CD4-positive, alpha-beta T cell (primary cell): ENCODE measurements at regions of chr7 and their contacts with region 1.

Region 1: GRCh38 chr7:7968543-7969305 is at the start of gene GLCCI1:
- DNase-seq: peak; percentile 91 to 99 (median 96)
- ATAC-seq: peak; percentile 90
- H3K4me3 ChIP-seq: peak within 1 kb of the TSS; percentile 86
- H3K4me3 Mint-ChIP-seq: peak within 1 kb of the TSS; percentile 94
- H3K27ac ChIP-seq: peak within 1 kb of the TSS; percentile 69 to 92
- H3K27ac Mint-ChIP-seq: peak within 1 kb of the TSS; percentile 78
- H3K4me1 ChIP-seq: peaks cover 14% of the 10 kb centered on the region
- H3K4me1 Mint-ChIP-seq: peaks cover 36% of the 10 kb centered on the region
- H3K27me3 ChIP-seq: no peaks in the 10 kb centered on the region
- H3K27me3 Mint-ChIP-seq: no peaks in the 10 kb centered on the region
- CTCF ChIP-seq: no peak
- total RNA-seq, gene GLCCI1: 22.2 to 22.3 TPM

Region 2: DNA sequence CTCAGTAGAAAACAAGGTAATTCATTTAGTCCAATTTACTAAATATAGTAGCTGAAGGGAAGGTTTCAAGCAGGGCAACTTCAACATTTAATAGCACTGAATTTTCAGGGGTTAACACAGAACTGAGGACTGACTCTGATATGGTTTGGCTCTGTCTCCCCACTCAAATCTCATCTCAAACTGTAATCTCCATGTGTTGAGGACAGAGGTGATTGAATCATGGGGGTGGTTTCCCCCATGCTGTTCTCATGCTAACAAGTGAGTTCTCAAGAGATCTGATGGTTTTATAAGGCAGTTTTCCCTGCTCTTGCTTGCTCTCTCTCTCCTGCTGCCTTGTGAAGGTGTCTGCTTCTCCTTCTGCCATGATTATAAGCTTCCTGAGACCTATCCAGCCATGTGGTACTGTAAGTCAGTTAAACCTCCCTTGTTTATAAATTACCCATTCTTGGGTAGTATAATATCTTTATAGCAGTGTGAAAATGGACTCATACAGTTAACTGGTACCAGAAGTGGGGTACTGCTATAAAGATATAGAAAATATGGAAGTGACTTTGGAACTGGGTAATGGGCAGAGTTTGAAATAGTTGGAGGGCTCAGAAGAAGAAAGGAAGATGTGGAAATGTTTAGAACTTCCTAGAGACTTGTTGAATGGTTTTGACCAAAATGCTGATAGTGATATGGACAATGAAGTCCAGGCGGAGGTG is 337.9 kb before region 1 on chr7:
- CTCF ChIA-PET with region 1: no interaction called
- POLR2A ChIA-PET with region 1: no interaction called
- intact Hi-C with region 1: no loop called
- DNase-seq: no peak
- ATAC-seq: no peak
- H3K4me3 ChIP-seq: no peak overlapping the region
- H3K4me3 Mint-ChIP-seq: no peak overlapping the region
- H3K27ac ChIP-seq: no peak overlapping the region
- H3K27ac Mint-ChIP-seq: no peak overlapping the region
- H3K4me1 ChIP-seq: no peaks in the 10 kb centered on the region
- H3K4me1 Mint-ChIP-seq: no peaks in the 10 kb centered on the region
- H3K27me3 ChIP-seq: no peaks in the 10 kb centered on the region
- H3K27me3 Mint-ChIP-seq: no peaks in the 10 kb centered on the region
- CTCF ChIP-seq: no peak

Region 3: GRCh38 chr7:7681179-7681935 is 287.4 kb before region 1 on chr7:
- CTCF ChIA-PET with region 1: no interaction called
- POLR2A ChIA-PET with region 1: interaction called, 18 read pairs
- intact Hi-C with region 1: no loop called
- DNase-seq: peak in 9 of 14 experiments; percentile 9 to 77 (median 19)
- ATAC-seq: peak; percentile 85
- H3K4me3 ChIP-seq: no peak overlapping the region
- H3K4me3 Mint-ChIP-seq: no peak overlapping the region
- H3K27ac ChIP-seq: no peak overlapping the region
- H3K27ac Mint-ChIP-seq: peak overlapping the region; percentile 64
- H3K4me1 ChIP-seq: no peaks in the 10 kb centered on the region
- H3K4me1 Mint-ChIP-seq: peaks cover 45% of the 10 kb centered on the region
- H3K27me3 ChIP-seq: no peaks in the 10 kb centered on the region
- H3K27me3 Mint-ChIP-seq: no peaks in the 10 kb centered on the region
- CTCF ChIP-seq: peak; percentile 78

Region 4: DNA sequence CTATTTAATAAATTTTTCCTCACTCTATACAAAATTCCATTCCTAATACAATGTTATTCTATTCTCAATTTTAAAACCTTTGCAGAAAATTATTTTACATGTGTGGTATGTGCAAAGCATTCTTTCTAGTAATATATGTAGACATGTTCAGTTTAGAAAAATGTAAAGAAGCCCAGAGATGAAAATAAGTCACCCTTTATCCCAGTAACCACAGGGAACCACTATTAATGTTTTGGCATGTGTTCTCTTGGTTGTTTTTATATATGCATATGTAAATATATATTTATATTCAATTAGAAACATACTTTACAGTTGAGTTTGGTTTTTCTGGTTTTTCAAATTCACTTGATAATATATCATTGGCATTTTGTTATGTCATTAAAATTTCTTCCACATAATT is 14.9 kb before region 1 on chr7:
- CTCF ChIA-PET with region 1: interaction called, 3 read pairs
- POLR2A ChIA-PET with region 1: interaction called, 13 read pairs
- intact Hi-C with region 1: no loop called
- DNase-seq: no peak
- ATAC-seq: no peak
- H3K4me3 ChIP-seq: no peak overlapping the region
- H3K4me3 Mint-ChIP-seq: no peak overlapping the region
- H3K27ac ChIP-seq: no peak overlapping the region
- H3K27ac Mint-ChIP-seq: no peak overlapping the region
- H3K4me1 ChIP-seq: no peaks in the 10 kb centered on the region
- H3K4me1 Mint-ChIP-seq: no peaks in the 10 kb centered on the region
- H3K27me3 ChIP-seq: no peaks in the 10 kb centered on the region
- H3K27me3 Mint-ChIP-seq: no peaks in the 10 kb centered on the region
- CTCF ChIP-seq: no peak

Region 5: DNA sequence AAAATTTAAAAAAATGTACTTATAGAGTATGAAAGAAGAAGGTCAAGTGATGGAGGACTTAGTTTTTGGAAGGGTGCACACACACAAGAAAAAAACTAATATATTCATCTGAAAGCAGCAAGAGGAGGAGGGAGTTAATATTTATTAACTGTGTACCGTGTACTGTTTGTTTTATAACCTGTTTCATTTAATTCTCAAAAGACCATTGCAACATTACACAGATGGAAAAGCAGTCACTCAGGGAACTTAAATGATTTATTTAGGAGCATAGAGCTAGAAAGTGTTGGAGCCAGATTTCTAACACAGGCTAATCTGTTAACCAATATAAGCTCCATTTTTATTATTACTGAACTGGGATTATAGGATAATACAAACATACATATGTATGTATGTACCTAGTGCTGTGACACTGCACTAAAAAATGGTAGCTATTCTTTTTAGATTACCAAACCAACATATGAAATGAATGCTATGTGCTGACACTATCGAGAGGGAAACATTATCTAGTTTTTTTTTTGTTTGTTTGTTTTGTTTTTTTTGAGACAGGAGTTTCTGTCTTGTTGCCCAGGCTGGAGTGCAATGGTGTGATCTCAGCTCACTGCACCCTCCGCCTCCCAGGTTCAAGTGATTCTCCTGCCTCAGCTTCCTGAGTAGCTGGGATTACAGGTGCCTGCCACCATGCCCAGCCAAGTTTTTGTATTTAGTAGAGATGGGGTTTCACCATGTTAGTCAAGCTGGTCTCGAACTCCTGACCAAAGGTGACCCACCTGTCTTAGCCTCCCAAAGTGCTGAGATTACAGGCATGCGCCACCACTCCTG is 36.8 kb after region 1 on chr7:
- CTCF ChIA-PET with region 1: no interaction called
- POLR2A ChIA-PET with region 1: interaction called, 7 read pairs
- intact Hi-C with region 1: loop called in 1 of 2 experiments (anchors 5 kb)
- DNase-seq: no peak
- ATAC-seq: no peak
- H3K4me3 ChIP-seq: no peak overlapping the region
- H3K4me3 Mint-ChIP-seq: no peak overlapping the region
- H3K27ac ChIP-seq: no peak overlapping the region
- H3K27ac Mint-ChIP-seq: peak overlapping the region; percentile 38
- H3K4me1 ChIP-seq: no peaks in the 10 kb centered on the region
- H3K4me1 Mint-ChIP-seq: peaks cover 26% of the 10 kb centered on the region
- H3K27me3 ChIP-seq: no peaks in the 10 kb centered on the region
- H3K27me3 Mint-ChIP-seq: no peaks in the 10 kb centered on the region
- CTCF ChIP-seq: no peak

Region 6: DNA sequence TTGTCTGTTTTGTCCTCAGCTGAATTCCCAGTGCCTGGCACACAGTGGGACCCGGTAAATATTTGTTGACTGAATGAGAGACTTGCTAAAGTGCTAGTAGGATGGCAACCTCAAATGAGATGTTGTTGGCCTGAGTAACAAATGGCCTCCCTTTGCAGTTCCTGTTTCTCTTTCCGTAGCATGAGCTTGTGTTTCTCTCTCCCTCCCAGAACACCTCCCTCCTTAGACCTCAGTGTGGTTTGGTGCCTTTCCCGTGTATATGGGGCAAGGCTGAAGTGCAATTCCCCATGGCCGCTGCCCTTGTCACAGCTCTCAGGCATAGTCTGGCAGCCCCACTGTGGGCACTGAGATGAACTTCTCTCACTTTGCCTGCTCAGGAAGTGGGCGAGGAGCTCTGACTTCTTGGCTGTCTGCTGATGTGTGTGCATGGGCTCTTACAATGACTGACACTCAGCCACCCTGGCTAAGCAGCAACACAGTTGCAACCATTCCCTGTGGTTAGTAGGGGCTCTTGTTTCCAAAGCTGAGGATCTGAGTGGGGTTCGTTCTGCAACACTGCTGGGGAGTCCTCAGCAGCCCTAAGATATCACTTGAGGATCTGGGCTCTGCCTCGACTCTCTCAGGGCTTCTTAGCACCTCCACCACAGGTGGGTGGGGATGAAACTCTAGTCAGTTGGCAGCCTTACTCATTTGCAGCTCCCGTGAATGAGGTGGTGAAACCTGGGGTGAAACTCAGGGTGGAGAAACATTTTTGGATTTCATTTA is 157.1 kb after region 1 on chr7:
- CTCF ChIA-PET with region 1: interaction called, 3 read pairs
- POLR2A ChIA-PET with region 1: interaction called, 29 read pairs
- intact Hi-C with region 1: loop called (anchors 2 to 5 kb)
- DNase-seq: peak; percentile 60 to 93 (median 76)
- ATAC-seq: peak; percentile 94
- H3K4me3 ChIP-seq: no peak overlapping the region
- H3K4me3 Mint-ChIP-seq: peak overlapping the region; percentile 56
- H3K27ac ChIP-seq: peak overlapping the region; percentile 74 to 83
- H3K27ac Mint-ChIP-seq: peak overlapping the region; percentile 96
- H3K4me1 ChIP-seq: peaks cover 83% of the 10 kb centered on the region
- H3K4me1 Mint-ChIP-seq: peaks cover 82% of the 10 kb centered on the region
- H3K27me3 ChIP-seq: no peaks in the 10 kb centered on the region
- H3K27me3 Mint-ChIP-seq: no peaks in the 10 kb centered on the region
- CTCF ChIP-seq: no peak

Region 7: DNA sequence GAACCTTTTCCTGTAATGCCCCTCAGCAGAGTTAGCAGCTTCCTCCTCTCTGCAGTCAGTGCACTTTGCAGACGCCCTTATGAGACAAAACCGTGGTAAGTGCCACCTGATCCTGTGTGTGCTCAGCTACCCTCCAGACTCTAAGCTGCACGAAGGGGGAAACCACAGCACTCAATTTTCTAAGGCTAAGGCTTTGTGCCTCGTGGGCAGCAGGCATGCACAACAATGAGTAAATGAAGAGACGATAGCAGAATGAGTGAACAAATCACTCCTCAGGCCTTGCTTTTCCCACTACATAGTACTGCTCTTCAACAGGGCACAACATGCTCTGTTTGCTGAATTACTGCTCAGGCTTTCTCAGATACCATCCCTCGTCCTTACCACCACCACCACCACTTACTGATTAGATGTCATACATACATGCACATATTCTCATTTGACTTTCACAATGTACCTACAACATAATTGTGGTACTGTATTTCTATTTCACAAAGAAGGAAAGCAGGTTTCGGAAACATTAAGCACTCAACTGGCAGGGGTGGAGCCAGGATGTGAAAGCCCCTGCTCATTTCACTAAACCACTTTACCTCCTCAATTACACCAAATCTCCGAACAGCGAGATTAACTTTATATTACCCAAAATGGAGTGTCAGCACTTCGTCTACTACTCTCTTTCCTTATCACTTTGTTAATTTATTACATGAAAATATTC is 207.8 kb after region 1 on chr7:
- CTCF ChIA-PET with region 1: no interaction called
- POLR2A ChIA-PET with region 1: interaction called, 4 read pairs
- intact Hi-C with region 1: loop called in 1 of 2 experiments (anchors 1 kb)
- DNase-seq: peak; percentile 47 to 87 (median 64)
- ATAC-seq: peak; percentile 93
- H3K4me3 ChIP-seq: peak overlapping the region; percentile 22
- H3K4me3 Mint-ChIP-seq: peak overlapping the region; percentile 72
- H3K27ac ChIP-seq: peak overlapping the region; percentile 82 to 88
- H3K27ac Mint-ChIP-seq: peak overlapping the region; percentile 96
- H3K4me1 ChIP-seq: peaks cover 42% of the 10 kb centered on the region
- H3K4me1 Mint-ChIP-seq: peaks cover 60% of the 10 kb centered on the region
- H3K27me3 ChIP-seq: no peaks in the 10 kb centered on the region
- H3K27me3 Mint-ChIP-seq: no peaks in the 10 kb centered on the region
- CTCF ChIP-seq: no peak

Region 8: GRCh38 chr7:8322667-8323066 is 353.9 kb after region 1 on chr7:
- CTCF ChIA-PET with region 1: no interaction called
- POLR2A ChIA-PET with region 1: no interaction called
- intact Hi-C with region 1: no loop called
- DNase-seq: no peak
- ATAC-seq: no peak
- H3K4me3 ChIP-seq: no peak overlapping the region
- H3K4me3 Mint-ChIP-seq: no peak overlapping the region
- H3K27ac ChIP-seq: no peak overlapping the region
- H3K27ac Mint-ChIP-seq: no peak overlapping the region
- H3K4me1 ChIP-seq: no peaks in the 10 kb centered on the region
- H3K4me1 Mint-ChIP-seq: no peaks in the 10 kb centered on the region
- H3K27me3 ChIP-seq: peaks cover 5 to 13% of the 10 kb centered on the region in 2 experiments
- H3K27me3 Mint-ChIP-seq: peaks cover 38% of the 10 kb centered on the region
- CTCF ChIP-seq: no peak